ENCODE measurements at regions of chr17 and their contacts with region 1.

Region 1: DNA sequence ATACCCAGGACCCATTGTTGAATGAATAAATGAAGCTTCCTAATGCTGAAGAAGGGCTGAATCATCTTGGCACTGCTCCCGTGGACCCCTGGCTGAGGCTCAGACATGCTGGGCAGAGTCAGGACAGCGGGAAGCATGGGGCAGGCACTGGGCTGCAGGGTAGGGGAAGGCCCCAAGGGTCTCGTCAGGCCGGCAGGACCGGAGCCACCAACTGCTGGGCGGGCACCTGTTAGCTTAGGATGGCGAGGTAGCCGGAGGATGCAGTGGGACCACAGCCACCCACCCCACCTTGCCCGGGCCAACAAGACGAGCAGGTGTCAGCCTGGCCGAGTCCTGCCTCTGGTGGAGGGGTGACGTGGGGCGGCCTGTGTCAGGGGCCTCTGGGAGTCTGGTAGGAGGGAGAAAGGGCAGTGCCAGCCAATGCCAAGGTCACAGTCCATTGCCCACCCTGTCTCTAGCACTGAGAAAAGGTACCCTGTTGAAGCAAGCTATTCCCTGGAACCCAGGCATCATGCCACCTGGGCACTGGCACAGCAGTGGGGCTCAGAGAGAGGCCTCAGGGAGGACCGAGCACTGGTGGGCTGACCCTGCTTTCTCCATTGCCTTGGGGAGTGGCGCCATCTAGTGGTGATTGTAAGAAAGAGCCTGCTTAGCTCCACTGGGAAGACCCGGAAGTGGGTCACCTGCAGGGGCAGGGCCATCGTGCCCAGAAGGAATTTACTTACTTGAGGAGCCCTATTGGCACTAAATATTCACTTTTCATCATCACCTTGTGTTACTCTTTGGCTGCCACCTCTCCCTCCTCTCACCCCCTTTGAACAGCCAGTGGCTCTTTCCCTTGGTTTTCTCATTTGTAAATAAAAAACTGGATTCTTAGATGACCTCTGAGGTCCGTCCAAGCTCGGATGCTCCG is 3.0 kb upstream of the DLX3 start:
- DNase-seq: peak; percentile 30
- ATAC-seq: peak; percentile 78
- H3K4me3 ChIP-seq: peak overlapping the region; percentile 13 to 24; a peak in 3 of 4 replicates
- H3K27ac ChIP-seq: peak overlapping the region; percentile 72
- H3K4me1 ChIP-seq: peaks cover 19% of the 10 kb centered on the region
- H3K27me3 ChIP-seq: no peaks in the 10 kb centered on the region
- CTCF ChIP-seq: peak; percentile 96

Region 2: DNA sequence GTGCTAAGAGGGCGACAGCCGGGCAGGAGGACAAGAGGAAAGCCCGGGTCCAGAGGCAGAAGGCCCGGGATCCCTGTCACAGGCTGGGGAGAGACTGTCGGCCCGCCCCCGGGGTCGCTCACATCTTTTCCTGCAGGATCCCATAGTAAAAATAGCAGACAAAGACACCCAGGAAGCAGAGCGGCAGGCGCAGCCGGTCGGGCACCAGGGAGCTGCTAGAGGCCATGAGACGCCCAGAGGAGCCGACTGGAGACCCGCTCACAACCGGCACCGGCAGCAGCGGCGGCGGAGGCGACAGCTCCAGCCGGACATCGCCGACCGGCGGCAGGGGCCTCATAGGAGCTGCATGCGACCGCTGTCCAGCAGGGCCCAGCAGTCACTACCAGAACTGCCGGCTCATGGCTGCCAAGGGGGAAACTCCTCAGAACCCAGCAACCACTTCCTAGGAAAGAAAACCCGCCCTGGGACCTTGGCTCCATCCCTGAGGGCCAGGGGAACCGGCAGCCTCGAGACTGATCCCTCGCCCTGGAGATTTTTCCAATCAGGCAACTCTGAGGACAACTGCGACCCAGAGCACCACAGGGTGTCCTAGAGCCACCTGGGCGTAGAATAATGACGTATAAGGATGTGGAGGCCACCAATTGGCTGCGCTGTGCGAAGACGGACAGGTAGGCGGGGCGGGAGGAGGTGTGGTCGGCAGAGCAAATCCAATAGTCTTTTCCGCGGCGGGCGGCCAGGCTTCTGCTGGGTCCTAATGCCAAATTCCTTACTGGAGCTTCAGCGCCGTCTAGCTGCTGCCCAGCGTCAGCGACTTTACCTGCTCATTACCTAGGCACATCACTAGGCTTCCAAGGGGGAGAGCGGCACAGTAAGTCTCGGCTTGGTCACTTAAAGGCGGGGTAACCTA is 290.2 kb before region 1 on chr17 and contains the start of gene SLC35B1:
- CTCF ChIA-PET with region 1: interaction called, 4 read pairs
- POLR2A ChIA-PET with region 1: no interaction called
- in situ Hi-C with region 1: no loop called
- intact Hi-C with region 1: loop called (anchors 10 kb)
- DNase-seq: peak; percentile 98
- ATAC-seq: peak; percentile 99
- H3K4me3 ChIP-seq: peak within 1 kb of the TSS; percentile 83 to 93
- H3K27ac ChIP-seq: peak within 1 kb of the TSS; percentile 98
- H3K4me1 ChIP-seq: peaks cover 15% of the 10 kb centered on the region
- H3K27me3 ChIP-seq: no peaks in the 10 kb centered on the region
- CTCF ChIP-seq: peak; percentile 98
- total RNA-seq, gene SLC35B1: 84.6 TPM

Region 3: GRCh38 chr17:49880291-49881053 is 117.6 kb before region 1 on chr17:
- CTCF ChIA-PET with region 1: interaction called, 28 read pairs
- POLR2A ChIA-PET with region 1: no interaction called
- in situ Hi-C with region 1: no loop called
- intact Hi-C with region 1: loop called (anchors 1 kb)
- DNase-seq: no peak
- ATAC-seq: peak; percentile 96
- H3K4me3 ChIP-seq: peak overlapping the region; percentile 10 to 20; a peak in 2 of 4 replicates
- H3K27ac ChIP-seq: no peak overlapping the region
- H3K4me1 ChIP-seq: peaks cover 4% of the 10 kb centered on the region; the same call in 1 of the 2 replicates
- H3K27me3 ChIP-seq: no peaks in the 10 kb centered on the region; the same call in 1 of the 2 replicates
- CTCF ChIP-seq: peak; percentile 99

Region 4: GRCh38 chr17:49910094-49910857 is 87.8 kb before region 1 on chr17:
- CTCF ChIA-PET with region 1: interaction called, 8 read pairs
- POLR2A ChIA-PET with region 1: no interaction called
- in situ Hi-C with region 1: loop called (anchors 5 kb)
- intact Hi-C with region 1: no loop called
- DNase-seq: no peak
- ATAC-seq: peak; percentile 75
- H3K4me3 ChIP-seq: peak overlapping the region; percentile 38 to 46
- H3K27ac ChIP-seq: no peak overlapping the region
- H3K4me1 ChIP-seq: peaks cover 24% of the 10 kb centered on the region
- H3K27me3 ChIP-seq: 0 out of 2 replicates have a peak, but pooled peaks cover 2% of the 10 kb centered on the region
- CTCF ChIP-seq: no peak

Region 5: GRCh38 chr17:49959183-49959935 is 38.7 kb before region 1 on chr17:
- CTCF ChIA-PET with region 1: interaction called, 10 read pairs
- POLR2A ChIA-PET with region 1: no interaction called
- in situ Hi-C with region 1: no loop called
- intact Hi-C with region 1: no loop called
- DNase-seq: no peak
- ATAC-seq: peak; percentile 39; the same call in 1 of the 2 replicates
- H3K4me3 ChIP-seq: no peak overlapping the region
- H3K27ac ChIP-seq: no peak overlapping the region
- H3K4me1 ChIP-seq: no peaks in the 10 kb centered on the region
- H3K27me3 ChIP-seq: no peaks in the 10 kb centered on the region
- CTCF ChIP-seq: no peak

Measured in Panc1 (cell line).